H1 (cell line): ENCODE measurements at regions of chr14 and their contacts with region 1.

Region 1: GRCh38 chr14:105368965-105369652 is 29.2 kb upstream of the TEX22 start:
- DNase-seq: no peak
- H3K4me3 ChIP-seq: no peak overlapping the region
- H3K27ac ChIP-seq: no peak overlapping the region
- H3K4me1 ChIP-seq: no peaks in the 10 kb centered on the region
- H3K27me3 ChIP-seq: no peaks in the 10 kb centered on the region; a peak in 1 of 7 replicates
- CTCF ChIP-seq: no peak
- EP300 ChIP-seq: no peak
- POLR2A ChIP-seq: no peak
- RAD21 ChIP-seq: no peak

Region 2: GRCh38 chr14:105380756-105381155 is 11.6 kb after region 1 on chr14:
- CTCF ChIA-PET with region 1: interaction called, 11 read pairs
- POLR2A ChIA-PET with region 1: no interaction called
- DNase-seq: no peak
- H3K4me3 ChIP-seq: no peak overlapping the region
- H3K27ac ChIP-seq: no peak overlapping the region
- H3K4me1 ChIP-seq: no peaks in the 10 kb centered on the region
- H3K27me3 ChIP-seq: no peaks in the 10 kb centered on the region
- CTCF ChIP-seq: no peak
- EP300 ChIP-seq: no peak
- POLR2A ChIP-seq: no peak
- RAD21 ChIP-seq: no peak

Region 3: DNA sequence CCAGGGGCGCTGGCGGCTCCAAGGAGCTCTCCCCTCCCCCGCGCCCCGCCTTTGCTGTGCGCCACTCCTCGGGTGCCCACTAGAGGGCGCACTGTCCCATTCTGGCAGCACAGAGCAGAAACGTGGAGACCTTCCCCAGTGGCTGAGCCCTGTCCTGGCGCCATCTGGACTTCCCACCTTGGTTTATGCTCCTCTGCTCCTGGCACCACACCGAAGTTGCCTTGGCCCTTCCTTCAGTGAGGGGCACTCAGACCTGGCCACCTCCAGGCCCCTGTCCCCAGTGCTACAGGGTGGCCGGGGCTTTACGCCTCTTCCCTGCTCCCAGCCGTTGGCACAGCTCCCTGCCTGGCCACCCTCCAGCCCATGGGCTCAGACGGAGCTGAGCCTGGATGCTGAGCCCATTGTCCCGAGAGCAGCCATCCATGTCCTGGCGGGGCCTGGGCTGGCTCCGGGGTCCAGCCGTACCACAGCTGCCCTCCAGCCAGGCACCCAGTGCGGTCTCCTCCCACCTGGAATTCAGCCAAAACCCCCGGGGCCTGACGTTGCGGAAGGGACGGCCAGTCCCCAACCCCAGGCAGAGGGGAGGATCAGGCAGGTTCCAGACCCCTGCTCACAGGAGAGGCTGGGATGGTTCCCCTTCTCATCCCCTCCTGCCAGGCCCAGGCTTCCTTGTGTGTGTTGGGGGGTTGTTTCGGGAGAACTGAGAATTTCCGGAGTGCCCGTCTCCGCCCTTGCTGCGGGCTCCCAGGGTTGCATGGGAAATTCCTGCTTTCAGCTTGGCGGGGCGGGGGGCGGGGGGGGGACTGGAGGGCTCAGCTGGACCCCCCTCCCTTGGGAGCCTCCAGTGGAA is 112.1 kb after region 1 on chr14:
- CTCF ChIA-PET with region 1: interaction called, 24 read pairs
- POLR2A ChIA-PET with region 1: no interaction called
- DNase-seq: peak; percentile 66 to 99
- H3K4me3 ChIP-seq: peak overlapping the region in 2 of 4 experiments; percentile 40 to 52; a peak in 4 of 8 replicates
- H3K27ac ChIP-seq: 0 out of 2 replicates have a peak overlapping the region, but pooled peaks have one; percentile 8
- H3K4me1 ChIP-seq: peaks cover 0 to 38% (median 26%) of the 10 kb centered on the region in 4 experiments; a peak in 6 of 7 replicates
- H3K27me3 ChIP-seq: peaks cover 50 to 99% (median 82%) of the 10 kb centered on the region in 4 experiments
- CTCF ChIP-seq: peak in 2 of 3 experiments; percentile 99; a peak in 3 of 4 replicates
- EP300 ChIP-seq: peak; percentile 61 to 86; a peak in 2 of 3 replicates
- POLR2A ChIP-seq: peak in 1 of 2 experiments; percentile 83; a peak in 2 of 3 replicates
- RAD21 ChIP-seq: peak; percentile 56 to 67